B cell (primary cell): ENCODE measurements at regions of chr7 and their contacts with region 1.

Region 1: DNA sequence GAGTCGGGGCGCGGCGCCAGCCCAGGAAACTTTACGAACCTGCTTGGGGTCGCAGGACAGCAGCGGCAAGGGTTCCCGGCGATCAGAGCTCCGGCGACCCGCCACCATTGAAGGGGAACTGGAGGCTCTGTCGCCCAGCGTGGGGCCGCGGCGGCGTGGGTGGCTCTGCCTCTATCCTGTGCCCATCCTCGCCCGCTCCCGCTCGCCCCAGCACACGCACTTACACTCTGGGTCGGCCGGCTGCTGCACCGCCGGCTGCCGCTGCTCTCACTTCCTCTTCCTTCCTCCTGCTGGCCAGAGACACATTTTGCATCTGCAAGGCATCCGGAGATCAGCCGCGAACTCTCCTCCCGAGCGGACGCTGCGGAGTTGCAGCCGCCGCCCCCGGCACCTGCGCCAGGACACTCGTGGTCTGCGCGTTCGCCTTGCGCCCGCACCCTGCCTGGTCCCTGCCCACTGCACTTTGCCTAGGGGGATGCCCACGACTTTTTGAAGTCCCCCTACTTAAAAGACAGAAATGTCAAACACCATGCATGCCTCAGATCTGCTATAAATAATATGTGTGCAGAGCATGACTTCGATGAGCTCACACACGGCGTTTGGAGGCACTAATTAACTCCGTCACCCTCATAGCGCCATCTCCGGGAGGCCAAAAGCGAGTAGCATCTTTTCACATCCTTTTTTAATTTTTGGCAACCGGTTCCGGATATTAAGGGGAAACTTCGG is at the start of gene ELMO1:
- DNase-seq: peak; percentile 95
- ATAC-seq: peak; percentile 79
- H3K4me3 ChIP-seq: peak within 1 kb of the TSS; percentile 68 to 94 (median 83)
- H3K4me3 Mint-ChIP-seq: peak within 1 kb of the TSS; percentile 94
- H3K27ac ChIP-seq: peak within 1 kb of the TSS; percentile 83 to 93
- H3K27ac Mint-ChIP-seq: peak within 1 kb of the TSS; percentile 99
- H3K4me1 ChIP-seq: peaks cover 16 to 18% of the 10 kb centered on the region in 2 donors
- H3K4me1 Mint-ChIP-seq: peaks cover 47% of the 10 kb centered on the region
- H3K27me3 ChIP-seq: no peaks in the 10 kb centered on the region
- H3K27me3 Mint-ChIP-seq: no peaks in the 10 kb centered on the region
- CTCF ChIP-seq: peak; percentile 37
- total RNA-seq, gene ELMO1: 166 and 177 TPM in 2 replicates

Region 2: DNA sequence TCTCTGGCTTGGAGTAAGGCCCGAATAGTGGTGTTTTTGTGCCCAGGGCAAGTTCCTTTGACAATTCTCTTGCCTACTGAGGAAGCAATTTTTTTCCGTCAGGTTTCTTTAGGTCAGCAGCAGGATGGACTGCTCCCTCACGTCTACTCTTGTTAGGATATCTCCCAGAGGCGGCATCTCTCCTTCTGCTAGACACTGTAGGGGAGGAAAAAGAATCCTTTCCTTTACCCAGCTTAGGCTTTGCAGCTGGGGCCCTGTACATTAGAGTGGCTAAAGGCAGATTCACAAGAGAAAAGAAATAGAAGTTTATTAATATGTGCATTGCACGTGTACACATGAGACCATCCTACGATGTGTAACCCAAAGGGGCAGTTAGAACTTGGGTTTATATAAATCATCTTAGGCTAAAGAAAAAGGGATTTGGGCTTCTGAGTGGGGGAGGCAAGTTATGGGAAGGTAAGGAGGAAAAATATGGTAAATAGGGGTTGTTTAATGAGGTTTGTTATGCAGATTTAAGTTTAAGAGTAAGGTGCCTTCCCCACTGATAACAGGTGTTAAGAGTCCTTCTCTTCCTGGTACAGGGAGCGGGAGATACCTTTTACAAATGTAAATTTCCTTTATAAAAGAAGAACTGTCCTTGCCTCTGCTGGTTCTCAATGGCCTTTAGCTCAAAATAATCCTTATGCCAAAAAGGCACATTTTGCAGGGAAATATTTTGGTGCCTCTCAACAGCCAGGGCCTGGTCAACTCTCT is 880.9 kb before region 1 on chr7:
- CTCF ChIA-PET with region 1: no interaction called
- POLR2A ChIA-PET with region 1: interaction called, 10 read pairs
- intact Hi-C with region 1: no loop called
- DNase-seq: no peak
- ATAC-seq: no peak
- H3K4me3 ChIP-seq: no peak overlapping the region
- H3K4me3 Mint-ChIP-seq: no peak overlapping the region
- H3K27ac ChIP-seq: no peak overlapping the region
- H3K27ac Mint-ChIP-seq: no peak overlapping the region
- H3K4me1 ChIP-seq: no peaks in the 10 kb centered on the region
- H3K4me1 Mint-ChIP-seq: no peaks in the 10 kb centered on the region
- H3K27me3 ChIP-seq: no peaks in the 10 kb centered on the region
- H3K27me3 Mint-ChIP-seq: peaks cover 6% of the 10 kb centered on the region
- CTCF ChIP-seq: no peak

Region 3: DNA sequence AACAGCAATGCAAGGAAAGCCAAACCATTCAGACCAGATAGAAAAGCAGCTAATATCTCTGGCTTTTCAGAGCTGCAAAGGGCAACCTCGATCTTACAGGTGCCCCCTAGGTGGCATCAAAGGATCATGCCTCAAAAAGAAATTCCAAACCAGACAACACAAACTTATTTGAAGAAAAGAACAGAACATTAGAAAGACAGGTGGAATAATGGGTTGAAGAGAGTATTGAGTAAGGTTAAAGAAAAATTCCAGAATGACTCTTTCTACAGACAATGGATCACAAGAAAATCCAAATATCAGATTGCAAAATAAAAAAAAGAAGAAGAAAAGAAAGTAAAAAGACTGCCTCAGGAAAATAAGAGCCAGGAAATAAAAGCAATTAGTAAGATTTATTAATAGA is 213.9 kb before region 1 on chr7:
- CTCF ChIA-PET with region 1: interaction called, 14 read pairs
- POLR2A ChIA-PET with region 1: no interaction called
- intact Hi-C with region 1: loop called (anchors 1 kb)
- DNase-seq: peak; percentile 58
- ATAC-seq: peak; percentile 24
- H3K4me3 ChIP-seq: no peak overlapping the region
- H3K4me3 Mint-ChIP-seq: no peak overlapping the region
- H3K27ac ChIP-seq: no peak overlapping the region
- H3K27ac Mint-ChIP-seq: no peak overlapping the region
- H3K4me1 ChIP-seq: no peaks in the 10 kb centered on the region
- H3K4me1 Mint-ChIP-seq: peaks cover 2% of the 10 kb centered on the region
- H3K27me3 ChIP-seq: no peaks in the 10 kb centered on the region
- H3K27me3 Mint-ChIP-seq: no peaks in the 10 kb centered on the region
- CTCF ChIP-seq: peak; percentile 81

Region 4: DNA sequence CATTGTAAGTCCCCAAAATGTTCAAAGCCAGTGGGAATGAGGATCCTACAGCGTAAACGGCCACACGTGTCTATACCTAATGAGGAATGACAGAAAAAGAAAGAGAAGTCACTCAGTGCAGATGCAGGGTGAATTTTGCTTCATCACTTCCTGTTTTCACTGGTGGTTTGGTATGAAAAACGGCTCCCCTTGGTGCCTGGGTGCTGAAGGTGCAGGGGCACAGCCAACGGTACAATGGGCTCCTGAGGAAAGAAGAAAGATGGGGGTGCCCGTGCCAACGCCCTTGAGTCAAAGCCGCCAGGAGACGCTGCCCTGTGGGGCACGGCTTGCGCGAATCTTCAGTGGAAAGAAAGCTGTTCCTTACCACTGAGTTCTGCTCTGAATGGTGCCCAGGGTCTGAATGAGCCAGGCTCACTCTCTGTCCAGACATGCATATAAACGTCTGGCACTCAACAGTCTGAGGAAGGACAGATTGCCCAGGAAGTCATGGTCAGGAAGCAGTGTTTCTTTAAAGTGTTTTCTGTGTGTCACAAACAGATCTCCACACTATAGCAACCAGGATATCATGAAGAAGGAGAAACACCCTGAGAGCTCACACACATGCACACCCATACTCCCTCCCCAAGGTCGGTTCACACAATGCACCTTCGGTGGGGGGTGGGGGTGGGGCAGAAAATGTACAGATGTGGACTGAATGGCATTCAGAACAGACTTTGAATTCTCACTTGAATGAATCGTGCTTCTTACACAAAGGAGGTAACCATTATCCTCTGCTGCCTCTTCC is 105.9 kb before region 1 on chr7:
- CTCF ChIA-PET with region 1: interaction called, 5 read pairs
- POLR2A ChIA-PET with region 1: no interaction called
- intact Hi-C with region 1: loop called (anchors 2 kb)
- DNase-seq: peak; percentile 86
- ATAC-seq: peak; percentile 88
- H3K4me3 ChIP-seq: peak overlapping the region; percentile 52 to 82 (median 70)
- H3K4me3 Mint-ChIP-seq: peak overlapping the region; percentile 99
- H3K27ac ChIP-seq: peak overlapping the region; percentile 71 to 75
- H3K27ac Mint-ChIP-seq: peak overlapping the region; percentile 98
- H3K4me1 ChIP-seq: peaks cover 47 to 57% of the 10 kb centered on the region in 2 donors
- H3K4me1 Mint-ChIP-seq: peaks cover 76% of the 10 kb centered on the region
- H3K27me3 ChIP-seq: no peaks in the 10 kb centered on the region
- H3K27me3 Mint-ChIP-seq: no peaks in the 10 kb centered on the region
- CTCF ChIP-seq: peak; percentile 60

Region 5: GRCh38 chr7:37495574-37496184 is 46.9 kb after region 1 on chr7:
- CTCF ChIA-PET with region 1: interaction called, 16 read pairs
- POLR2A ChIA-PET with region 1: no interaction called
- intact Hi-C with region 1: loop called (anchors 2 kb)
- DNase-seq: peak; percentile 52
- ATAC-seq: peak; percentile 68
- H3K4me3 ChIP-seq: no peak overlapping the region
- H3K4me3 Mint-ChIP-seq: no peak overlapping the region
- H3K27ac ChIP-seq: no peak overlapping the region
- H3K27ac Mint-ChIP-seq: no peak overlapping the region
- H3K4me1 ChIP-seq: no peaks in the 10 kb centered on the region
- H3K4me1 Mint-ChIP-seq: no peaks in the 10 kb centered on the region
- H3K27me3 ChIP-seq: no peaks in the 10 kb centered on the region
- H3K27me3 Mint-ChIP-seq: no peaks in the 10 kb centered on the region
- CTCF ChIP-seq: peak; percentile 96

Region 6: DNA sequence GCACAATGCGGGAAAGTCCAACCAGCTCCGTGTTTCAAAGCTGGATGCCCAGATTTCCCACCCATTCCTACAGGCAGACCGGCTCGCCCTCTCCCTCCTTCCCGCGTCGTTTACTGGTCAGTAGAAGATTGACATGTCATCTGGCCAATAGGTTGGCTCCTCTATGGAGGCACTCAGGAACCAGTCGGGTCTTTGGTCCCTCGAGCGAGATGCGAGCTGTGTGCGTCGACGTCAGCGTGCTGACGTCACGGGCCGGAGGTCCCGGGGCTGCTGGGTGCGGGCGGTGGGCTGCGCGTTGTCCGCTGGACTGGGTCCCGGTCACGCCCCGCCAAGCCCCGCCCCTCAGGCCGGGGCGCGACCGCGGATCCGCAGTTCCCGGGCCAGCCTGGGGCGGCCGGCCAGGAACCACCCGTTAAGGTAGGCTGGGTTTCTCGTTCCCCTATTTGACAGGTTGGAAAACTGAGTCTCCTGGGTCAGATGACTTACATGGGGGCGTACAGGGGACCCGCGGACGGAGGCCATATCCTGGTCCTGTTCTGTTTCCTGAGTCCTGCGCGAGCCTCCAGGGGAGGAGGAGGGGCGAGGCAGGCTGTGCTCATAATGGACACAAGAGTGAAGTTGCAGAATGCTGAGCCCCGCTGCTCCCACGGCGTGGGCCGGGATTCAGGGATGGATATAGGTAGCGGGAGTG is 729.4 kb after region 1 on chr7 and contains the start of gene STARD3NL:
- CTCF ChIA-PET with region 1: no interaction called
- POLR2A ChIA-PET with region 1: no interaction called
- intact Hi-C with region 1: loop called (anchors 5 kb)
- DNase-seq: peak; percentile 98
- ATAC-seq: peak; percentile 95
- H3K4me3 ChIP-seq: peak within 1 kb of the TSS; percentile 36 to 98 (median 91)
- H3K4me3 Mint-ChIP-seq: peak within 1 kb of the TSS; percentile 97
- H3K27ac ChIP-seq: peak within 1 kb of the TSS; percentile 81 to 93
- H3K27ac Mint-ChIP-seq: peak within 1 kb of the TSS; percentile 95
- H3K4me1 ChIP-seq: peaks cover 16 to 17% of the 10 kb centered on the region in 2 donors
- H3K4me1 Mint-ChIP-seq: peaks cover 33% of the 10 kb centered on the region
- H3K27me3 ChIP-seq: no peaks in the 10 kb centered on the region
- H3K27me3 Mint-ChIP-seq: no peaks in the 10 kb centered on the region
- CTCF ChIP-seq: no peak
- total RNA-seq, gene STARD3NL: 13.4 and 14.2 TPM in 2 replicates